HEK293 (cell line): ENCODE measurements at regions of chr6 and their contacts with region 1.

Region 1: GRCh38 chr6:132279592-132280139 is 121.6 kb downstream of the MOXD1 start:
- H3K4me3 ChIP-seq: peak overlapping the region; percentile 46
- H3K27ac ChIP-seq: no peak overlapping the region
- H3K4me1 ChIP-seq: no peaks in the 10 kb centered on the region
- CTCF ChIP-seq: peak; percentile 85

Region 2: DNA sequence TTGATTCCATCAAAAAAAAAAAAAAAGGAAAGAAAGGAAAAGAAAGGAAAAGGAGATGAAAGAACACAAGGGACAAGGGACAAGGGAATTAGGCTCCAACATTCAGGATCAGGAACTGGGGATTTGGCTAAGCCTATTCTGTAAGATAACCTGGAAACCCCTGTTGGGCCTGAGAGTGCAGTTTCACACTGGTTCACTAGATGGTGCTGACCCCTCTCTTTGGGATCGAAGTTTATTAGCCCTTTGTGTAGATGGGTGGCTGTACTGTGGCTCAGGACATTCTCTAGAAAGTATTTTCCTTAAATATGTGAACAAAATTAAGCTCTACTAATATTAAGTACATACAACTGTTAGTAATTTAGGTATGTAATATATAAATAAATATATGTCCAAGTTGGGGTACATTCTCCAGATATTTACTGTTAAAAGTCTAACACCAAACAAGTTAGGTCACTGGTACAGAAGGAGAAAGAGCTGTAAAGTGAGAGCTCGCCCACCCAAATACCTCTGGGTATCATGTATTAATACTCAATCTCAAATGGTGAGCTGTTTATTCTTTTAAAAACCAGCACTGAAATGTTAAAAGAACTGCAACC is 584.7 kb before region 1 on chr6:
- CTCF ChIA-PET with region 1: interaction called, 10 read pairs
- POLR2A ChIA-PET with region 1: interaction called, 3 read pairs
- H3K4me3 ChIP-seq: no peak overlapping the region
- H3K27ac ChIP-seq: no peak overlapping the region
- H3K4me1 ChIP-seq: no peaks in the 10 kb centered on the region
- CTCF ChIP-seq: peak; percentile 57

Region 3: GRCh38 chr6:131960371-131961133 is 319.1 kb before region 1 on chr6:
- CTCF ChIA-PET with region 1: interaction called, 10 read pairs
- POLR2A ChIA-PET with region 1: no interaction called
- H3K4me3 ChIP-seq: no peak overlapping the region
- H3K27ac ChIP-seq: no peak overlapping the region
- H3K4me1 ChIP-seq: no peaks in the 10 kb centered on the region; the same call in 1 of the 2 replicates
- CTCF ChIP-seq: no peak

Region 4: GRCh38 chr6:132314432-132314831 is 34.8 kb after region 1 on chr6:
- CTCF ChIA-PET with region 1: interaction called, 23 read pairs
- POLR2A ChIA-PET with region 1: no interaction called
- H3K4me3 ChIP-seq: no peak overlapping the region
- H3K27ac ChIP-seq: no peak overlapping the region
- H3K4me1 ChIP-seq: no peaks in the 10 kb centered on the region
- CTCF ChIP-seq: no peak

Region 5: GRCh38 chr6:132445201-132445951 is 165.7 kb after region 1 on chr6:
- CTCF ChIA-PET with region 1: interaction called, 11 read pairs
- POLR2A ChIA-PET with region 1: no interaction called
- H3K4me3 ChIP-seq: no peak overlapping the region
- H3K27ac ChIP-seq: no peak overlapping the region
- H3K4me1 ChIP-seq: no peaks in the 10 kb centered on the region
- CTCF ChIP-seq: no peak

Region 6: DNA sequence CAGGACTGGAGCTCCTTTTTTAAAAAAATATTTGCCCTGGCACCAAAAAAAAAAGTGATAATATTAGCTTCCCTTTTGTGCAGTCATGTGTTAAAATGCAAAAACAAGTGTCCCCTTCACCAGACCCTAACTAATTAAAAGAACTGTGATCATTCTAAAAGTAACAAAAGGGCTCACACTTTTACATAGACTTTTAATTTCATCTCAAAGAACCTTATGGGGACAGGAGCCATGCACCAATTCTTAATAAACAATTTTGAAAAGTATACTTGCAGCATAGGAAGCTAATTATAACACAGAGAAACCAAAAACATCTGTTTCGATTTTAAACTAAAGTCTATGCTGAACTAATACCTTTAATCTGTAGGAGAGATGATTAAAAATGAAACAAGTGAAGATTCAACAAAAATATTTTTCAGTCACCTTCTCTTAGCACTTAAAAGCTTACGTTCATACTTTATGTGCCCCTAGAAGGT is 216.0 kb after region 1 on chr6:
- CTCF ChIA-PET with region 1: interaction called, 38 read pairs
- POLR2A ChIA-PET with region 1: no interaction called
- H3K4me3 ChIP-seq: no peak overlapping the region
- H3K27ac ChIP-seq: no peak overlapping the region
- H3K4me1 ChIP-seq: no peaks in the 10 kb centered on the region
- CTCF ChIP-seq: no peak

Region 7: DNA sequence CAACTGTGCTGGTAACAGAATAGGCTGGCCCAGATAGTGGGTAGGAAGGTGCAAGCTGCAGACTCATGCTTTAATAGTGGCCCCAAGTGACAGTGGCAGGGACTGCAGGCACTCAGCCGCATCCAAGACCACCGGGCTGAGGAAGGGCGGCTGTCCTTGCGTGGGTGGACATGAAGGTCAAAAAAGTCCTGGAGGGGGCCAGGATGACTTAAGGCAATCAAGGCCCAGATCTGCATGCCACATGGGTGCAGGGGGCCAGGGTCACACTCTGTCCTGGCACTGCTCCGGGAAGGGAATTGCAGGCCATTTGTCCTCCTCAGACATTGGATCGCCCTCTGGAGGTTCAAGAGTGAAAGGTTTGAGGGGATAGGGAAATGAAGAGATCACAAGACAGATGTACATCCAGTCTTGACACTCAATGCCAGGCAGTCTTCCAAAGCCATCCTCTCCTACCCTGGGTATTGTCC is 488.4 kb after region 1 on chr6:
- CTCF ChIA-PET with region 1: interaction called, 11 read pairs
- POLR2A ChIA-PET with region 1: no interaction called
- H3K4me3 ChIP-seq: no peak overlapping the region
- H3K27ac ChIP-seq: no peak overlapping the region
- H3K4me1 ChIP-seq: no peaks in the 10 kb centered on the region
- CTCF ChIP-seq: peak; percentile 38; the same call in 1 of the 2 replicates